PC-9 (cell line): ENCODE measurements at regions of chr1 and their contacts with region 1.

Region 1: GRCh38 chr1:53182111-53182593 is 14.5 kb upstream of the CPT2 start:
- DNase-seq: peak; percentile 63 to 79
- H3K4me3 ChIP-seq: no peak overlapping the region
- H3K27ac ChIP-seq: no peak overlapping the region
- H3K4me1 ChIP-seq: peaks cover 3% of the 10 kb centered on the region; the same call in 1 of the 2 replicates
- H3K27me3 ChIP-seq: no peaks in the 10 kb centered on the region
- CTCF ChIP-seq: peak; percentile 93

Region 2: DNA sequence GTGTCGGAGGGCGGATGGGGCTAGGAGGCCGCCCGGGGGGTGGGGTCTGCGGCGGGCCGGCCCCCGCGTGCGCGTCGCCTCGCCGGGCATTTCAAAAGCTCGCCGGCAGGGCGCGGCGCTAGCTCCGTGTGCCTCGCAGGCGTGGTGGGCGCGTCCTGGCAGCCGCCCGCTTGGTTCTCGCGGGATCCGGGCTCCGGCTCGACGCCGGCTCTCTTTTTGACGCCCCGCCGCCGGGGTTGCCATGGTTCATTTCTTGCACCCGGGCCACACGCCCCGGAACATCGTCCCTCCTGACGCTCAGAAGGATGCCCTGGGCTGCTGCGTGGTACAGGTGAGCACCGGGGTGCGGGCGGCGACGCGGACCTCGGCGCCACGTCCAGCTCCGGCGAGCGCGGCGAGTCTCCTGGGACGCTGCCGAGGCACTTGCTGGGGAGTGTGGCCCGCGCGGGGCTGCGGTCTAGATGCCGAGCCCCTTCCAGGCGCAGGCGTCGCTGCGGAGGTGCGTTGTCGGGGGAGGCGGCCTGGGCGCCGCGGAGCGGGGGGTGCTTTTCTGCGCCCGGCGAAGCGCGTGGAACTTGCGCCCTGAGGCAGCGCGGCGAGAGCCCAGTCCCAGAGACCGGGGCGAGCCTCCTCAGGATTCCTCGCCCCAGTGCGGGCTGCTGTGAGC is 339.4 kb before region 1 on chr1 and contains the start of gene ZYG11A:
- CTCF ChIA-PET with region 1: interaction called, 3 read pairs
- POLR2A ChIA-PET with region 1: no interaction called
- intact Hi-C with region 1: loop called (anchors 10 kb)
- DNase-seq: peak; percentile 75 to 93
- H3K4me3 ChIP-seq: peak within 1 kb of the TSS; percentile 95
- H3K27ac ChIP-seq: peak within 1 kb of the TSS; percentile 59
- H3K4me1 ChIP-seq: peaks cover 19% of the 10 kb centered on the region
- H3K27me3 ChIP-seq: no peaks in the 10 kb centered on the region
- CTCF ChIP-seq: peak; percentile 41; the same call in 1 of the 2 replicates
- total RNA-seq, gene ZYG11A: 9.7 and 11.5 TPM in 2 replicates

Region 3: GRCh38 chr1:52904927-52905698 is 277.0 kb before region 1 on chr1:
- CTCF ChIA-PET with region 1: no interaction called
- POLR2A ChIA-PET with region 1: no interaction called
- intact Hi-C with region 1: loop called (anchors 1 kb)
- DNase-seq: peak in 1 of 2 experiments; percentile 35
- H3K4me3 ChIP-seq: no peak overlapping the region
- H3K27ac ChIP-seq: no peak overlapping the region
- H3K4me1 ChIP-seq: peaks cover 6% of the 10 kb centered on the region
- H3K27me3 ChIP-seq: no peaks in the 10 kb centered on the region
- CTCF ChIP-seq: peak; percentile 66

Region 4: GRCh38 chr1:52927212-52928014 is 254.7 kb before region 1 on chr1 and contains the start of gene SCP2:
- CTCF ChIA-PET with region 1: interaction called, 16 read pairs
- POLR2A ChIA-PET with region 1: no interaction called
- intact Hi-C with region 1: no loop called
- DNase-seq: peak; percentile 45 to 71
- H3K4me3 ChIP-seq: peak within 1 kb of the TSS; percentile 97
- H3K27ac ChIP-seq: no peak within 1 kb of the TSS
- H3K4me1 ChIP-seq: 0 out of 2 replicates have a peak, but pooled peaks cover 9% of the 10 kb centered on the region
- H3K27me3 ChIP-seq: no peaks in the 10 kb centered on the region
- CTCF ChIP-seq: no peak
- total RNA-seq, gene SCP2: 87.8 and 95.8 TPM in 2 replicates

Region 5: GRCh38 chr1:53655931-53656746 is 474.0 kb after region 1 on chr1:
- CTCF ChIA-PET with region 1: no interaction called
- POLR2A ChIA-PET with region 1: no interaction called
- intact Hi-C with region 1: no loop called
- DNase-seq: no peak
- H3K4me3 ChIP-seq: no peak overlapping the region
- H3K27ac ChIP-seq: no peak overlapping the region
- H3K4me1 ChIP-seq: no peaks in the 10 kb centered on the region
- H3K27me3 ChIP-seq: peaks cover 86% of the 10 kb centered on the region
- CTCF ChIP-seq: no peak